ENCODE measurements at regions of chr7 and their contacts with region 1.

Region 1: DNA sequence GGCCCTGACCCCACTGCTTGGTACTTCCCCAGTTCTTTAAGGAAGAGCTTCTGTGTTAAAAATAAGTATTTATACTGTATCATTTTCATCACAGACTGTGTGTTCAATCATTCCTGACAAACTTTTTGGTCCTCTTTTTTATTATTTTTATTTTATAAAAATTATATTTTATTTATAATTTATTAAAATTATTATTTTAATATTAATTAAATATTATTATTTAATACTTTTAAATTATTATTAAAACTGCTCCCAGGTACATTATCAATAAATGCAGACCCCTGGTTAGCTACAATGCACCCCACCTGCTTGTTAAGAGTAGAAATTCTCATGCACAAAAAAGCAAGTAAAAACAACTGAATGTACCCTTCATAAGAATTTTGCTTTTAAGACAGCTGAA is 172.0 kb downstream of the GLI3 start:
- DNase-seq: no peak
- H3K4me3 ChIP-seq: no peak overlapping the region
- H3K27ac ChIP-seq: no peak overlapping the region
- H3K4me1 ChIP-seq: no peaks in the 10 kb centered on the region
- H3K27me3 ChIP-seq: peaks cover 30% of the 10 kb centered on the region
- CTCF ChIP-seq: no peak

Region 2: GRCh38 chr7:41907444-41907843 is 157.6 kb before region 1 on chr7:
- CTCF ChIA-PET with region 1: no interaction called
- POLR2A ChIA-PET with region 1: no interaction called
- intact Hi-C with region 1: no loop called
- DNase-seq: peak in 1 of 2 experiments; percentile 27
- H3K4me3 ChIP-seq: no peak overlapping the region
- H3K27ac ChIP-seq: no peak overlapping the region
- H3K4me1 ChIP-seq: no peaks in the 10 kb centered on the region
- H3K27me3 ChIP-seq: no peaks in the 10 kb centered on the region
- CTCF ChIP-seq: no peak

Region 3: GRCh38 chr7:41996381-41997035 is 68.5 kb before region 1 on chr7:
- CTCF ChIA-PET with region 1: interaction called, 20 read pairs
- POLR2A ChIA-PET with region 1: no interaction called
- intact Hi-C with region 1: no loop called
- DNase-seq: no peak
- H3K4me3 ChIP-seq: no peak overlapping the region
- H3K27ac ChIP-seq: no peak overlapping the region
- H3K4me1 ChIP-seq: no peaks in the 10 kb centered on the region
- H3K27me3 ChIP-seq: peaks cover 46% of the 10 kb centered on the region
- CTCF ChIP-seq: no peak

Measured in PC-9 (cell line).